ENCODE measurements at regions of chr10 and their contacts with region 1.

Region 1: GRCh38 chr10:24989867-24990266 is 26.1 kb downstream of the ENKUR start:
- DNase-seq: no peak
- H3K4me3 ChIP-seq: no peak overlapping the region
- H3K27ac ChIP-seq: no peak overlapping the region
- H3K4me1 ChIP-seq: no peaks in the 10 kb centered on the region
- H3K27me3 ChIP-seq: no peaks in the 10 kb centered on the region
- CTCF ChIP-seq: no peak; the same call in 1 of the 2 replicates

Region 2: GRCh38 chr10:24617771-24618391 is 372.0 kb before region 1 on chr10:
- CTCF ChIA-PET with region 1: no interaction called
- POLR2A ChIA-PET with region 1: no interaction called
- intact Hi-C with region 1: loop called (anchors 5 kb)
- DNase-seq: peak; percentile 74
- H3K4me3 ChIP-seq: no peak overlapping the region
- H3K27ac ChIP-seq: no peak overlapping the region
- H3K4me1 ChIP-seq: peaks cover 4% of the 10 kb centered on the region
- H3K27me3 ChIP-seq: no peaks in the 10 kb centered on the region
- CTCF ChIP-seq: peak; percentile 88

Region 3: DNA sequence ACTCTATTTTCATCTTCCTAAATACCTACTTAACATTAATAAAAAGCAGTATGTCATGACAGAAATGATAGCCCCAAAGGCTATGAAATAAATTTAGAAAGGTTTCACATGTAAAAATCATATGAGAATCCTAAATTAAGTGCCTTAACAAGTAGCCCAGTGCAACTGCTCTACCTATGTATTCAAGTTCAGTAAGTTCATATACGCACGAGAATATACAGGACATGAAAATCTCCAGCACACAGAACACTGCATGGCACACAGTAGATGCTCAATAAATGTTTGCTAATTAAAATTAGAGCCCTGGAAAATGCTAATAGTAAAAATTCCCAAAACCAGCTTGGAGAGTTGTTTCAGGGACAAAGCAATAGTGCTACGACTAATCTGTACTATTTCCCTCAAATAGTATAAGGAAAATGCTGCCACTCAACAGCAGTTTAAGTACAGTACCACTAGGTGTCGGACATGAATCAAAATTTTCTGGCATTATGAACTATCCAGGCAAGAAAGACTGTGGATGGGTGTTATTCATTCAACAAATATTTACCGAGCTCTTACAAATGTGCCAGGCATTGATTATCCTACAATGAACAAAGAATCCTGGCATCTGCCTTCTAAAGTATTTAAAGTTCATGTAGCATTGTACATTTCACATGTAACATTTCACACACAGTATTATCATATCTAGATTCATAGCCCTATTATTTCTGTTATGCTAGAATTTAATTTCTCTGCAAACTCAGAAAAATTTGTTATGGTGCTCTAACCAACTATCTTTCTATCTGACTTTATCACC is 347.0 kb before region 1 on chr10:
- CTCF ChIA-PET with region 1: interaction called, 3 read pairs
- POLR2A ChIA-PET with region 1: no interaction called
- intact Hi-C with region 1: loop called (anchors 5 kb)
- DNase-seq: peak; percentile 80
- H3K4me3 ChIP-seq: no peak overlapping the region
- H3K27ac ChIP-seq: no peak overlapping the region
- H3K4me1 ChIP-seq: no peaks in the 10 kb centered on the region
- H3K27me3 ChIP-seq: no peaks in the 10 kb centered on the region
- CTCF ChIP-seq: peak; percentile 87

Region 4: GRCh38 chr10:25142116-25142864 is 152.4 kb after region 1 on chr10:
- CTCF ChIA-PET with region 1: no interaction called
- POLR2A ChIA-PET with region 1: no interaction called
- intact Hi-C with region 1: no loop called
- DNase-seq: no peak
- H3K4me3 ChIP-seq: no peak overlapping the region
- H3K27ac ChIP-seq: no peak overlapping the region
- H3K4me1 ChIP-seq: no peaks in the 10 kb centered on the region
- H3K27me3 ChIP-seq: no peaks in the 10 kb centered on the region
- CTCF ChIP-seq: no peak

Measured in A673 (cell line).